A549 (cell line): ENCODE measurements at regions of chr11 and their contacts with region 1.

Region 1: DNA sequence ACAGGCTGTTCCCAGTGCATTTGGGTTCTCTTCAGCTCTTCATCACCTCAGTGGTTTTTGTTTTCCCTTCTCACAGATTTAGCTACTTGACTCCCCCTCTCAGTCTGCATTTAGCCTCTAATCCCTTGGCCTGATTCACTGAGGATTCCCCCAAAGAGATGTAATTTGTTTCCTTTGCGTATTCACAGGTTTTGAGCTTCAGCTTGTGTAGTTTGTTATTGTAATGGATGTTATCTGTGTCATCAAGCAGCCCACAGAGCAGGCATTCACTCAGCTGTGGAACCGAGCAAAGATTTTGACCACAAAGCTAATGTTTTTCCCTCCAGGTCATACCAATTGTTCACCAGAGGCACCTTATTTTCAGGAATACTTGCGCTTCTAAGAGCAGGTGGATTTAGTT is 6.4 kb upstream of the ME3 start:
- DNase-seq: no peak
- ATAC-seq: no peak
- H3K4me3 ChIP-seq: no peak overlapping the region
- H3K27ac ChIP-seq: peak overlapping the region in 1 of 2 experiments; percentile 56; a peak in 3 of 6 replicates
- H3K4me1 ChIP-seq: peaks cover 1% of the 10 kb centered on the region; the same call in 1 of the 3 replicates
- CTCF ChIP-seq: no peak
- EP300 ChIP-seq: no peak
- POLR2A ChIP-seq: no peak
- RAD21 ChIP-seq: no peak

Region 2: GRCh38 chr11:86696004-86696403 is 17.2 kb after region 1 on chr11:
- CTCF ChIA-PET with region 1: interaction called, 40 read pairs
- POLR2A ChIA-PET with region 1: no interaction called
- DNase-seq: peak in 1 of 2 experiments; percentile 37
- ATAC-seq: peak in 1 of 2 experiments; percentile 64; a peak in 3 of 6 replicates
- H3K4me3 ChIP-seq: no peak overlapping the region
- H3K27ac ChIP-seq: peak overlapping the region; percentile 51 to 81
- H3K4me1 ChIP-seq: peaks cover 52% of the 10 kb centered on the region
- CTCF ChIP-seq: no peak
- EP300 ChIP-seq: peak in 1 of 2 experiments; percentile 53; a peak in 1 of 5 replicates
- POLR2A ChIP-seq: no peak
- RAD21 ChIP-seq: no peak

Region 3: GRCh38 chr11:86990515-86990914 is 311.7 kb after region 1 on chr11:
- CTCF ChIA-PET with region 1: no interaction called
- POLR2A ChIA-PET with region 1: no interaction called
- DNase-seq: peak in 1 of 2 experiments; percentile 22
- ATAC-seq: no peak
- H3K4me3 ChIP-seq: no peak overlapping the region
- H3K27ac ChIP-seq: no peak overlapping the region
- H3K4me1 ChIP-seq: peaks cover 4% of the 10 kb centered on the region; the same call in 1 of the 3 replicates
- CTCF ChIP-seq: no peak
- EP300 ChIP-seq: no peak
- POLR2A ChIP-seq: no peak
- RAD21 ChIP-seq: no peak